ENCODE measurements at regions of chr11 and their contacts with region 1.

Region 1: DNA sequence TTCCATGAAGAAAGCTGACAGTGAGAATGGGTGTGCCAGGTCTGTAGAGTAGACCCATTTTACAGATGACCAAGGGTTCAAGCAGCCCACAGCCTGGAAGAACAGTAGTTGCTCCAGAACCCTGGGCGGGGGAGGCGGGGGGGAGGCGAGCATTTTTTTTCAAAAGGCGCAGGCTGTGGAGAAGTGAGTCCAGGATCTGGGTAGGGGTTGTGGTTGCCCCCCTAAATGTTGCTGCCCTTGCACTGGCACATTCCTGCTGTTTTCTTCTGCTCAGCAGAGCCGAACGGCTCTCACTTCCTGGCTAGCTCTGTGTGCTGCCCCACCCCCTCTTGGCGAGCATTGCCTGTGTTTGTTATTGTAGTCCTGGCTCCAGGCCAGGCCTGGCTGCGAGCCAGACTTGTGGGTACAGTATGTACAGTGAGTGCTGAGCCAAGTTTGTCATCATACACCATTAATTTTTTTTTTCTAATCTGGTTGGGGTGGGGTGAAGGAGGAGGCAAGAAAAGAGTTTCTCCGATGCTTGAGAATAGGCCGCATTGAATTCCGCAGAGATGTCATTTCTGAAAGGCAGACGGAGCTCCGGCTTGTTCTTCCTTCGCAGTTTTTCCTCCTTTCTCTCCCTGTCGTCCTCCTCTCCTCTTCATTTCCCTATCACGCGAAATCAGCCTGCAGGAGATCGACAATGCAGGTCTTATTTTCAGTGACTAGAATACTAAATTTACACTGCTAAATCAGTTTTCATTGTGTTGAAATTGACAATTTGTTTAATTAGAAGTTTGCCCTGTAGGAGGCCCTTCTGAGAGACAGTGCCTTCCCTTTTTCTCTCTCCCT is 100.5 kb downstream of the ZBTB16 start:
- DNase-seq: peak; percentile 100
- H3K4me3 Mint-ChIP-seq: peak overlapping the region; percentile 65
- H3K27ac Mint-ChIP-seq: peak overlapping the region; percentile 99
- H3K4me1 Mint-ChIP-seq: peaks cover 87% of the 10 kb centered on the region
- H3K27me3 Mint-ChIP-seq: no peaks in the 10 kb centered on the region
- CTCF ChIP-seq: peak; percentile 15

Region 2: DNA sequence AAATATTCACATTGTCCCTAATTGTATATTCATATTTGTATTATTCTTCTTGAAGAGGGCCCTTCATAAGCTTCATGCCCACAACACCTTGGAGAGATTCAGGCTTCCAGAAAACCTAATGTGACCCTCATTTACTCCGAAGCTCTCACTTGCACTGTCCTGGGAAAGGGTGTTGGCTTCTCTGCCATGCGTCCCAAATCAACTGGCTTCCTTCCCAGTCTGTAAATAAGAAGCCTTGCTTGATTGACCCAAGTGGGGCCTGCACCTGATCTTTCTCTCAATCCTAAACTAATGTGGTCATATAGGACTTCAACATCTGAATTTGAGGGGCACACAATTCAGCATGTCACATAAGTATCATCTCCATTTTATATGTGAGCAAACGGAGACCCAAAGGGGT is 141.0 kb before region 1 on chr11:
- CTCF ChIA-PET with region 1: no interaction called
- POLR2A ChIA-PET with region 1: no interaction called
- intact Hi-C with region 1: no loop called
- DNase-seq: no peak
- H3K4me3 Mint-ChIP-seq: no peak overlapping the region
- H3K27ac Mint-ChIP-seq: no peak overlapping the region
- H3K4me1 Mint-ChIP-seq: peaks cover 7% of the 10 kb centered on the region
- H3K27me3 Mint-ChIP-seq: no peaks in the 10 kb centered on the region
- CTCF ChIP-seq: no peak

Region 3: GRCh38 chr11:114080219-114080618 is 79.8 kb before region 1 on chr11:
- CTCF ChIA-PET with region 1: no interaction called
- POLR2A ChIA-PET with region 1: interaction called, 15 read pairs
- intact Hi-C with region 1: loop called (anchors 5 kb)
- DNase-seq: peak; percentile 75
- H3K4me3 Mint-ChIP-seq: peak overlapping the region; percentile 67
- H3K27ac Mint-ChIP-seq: peak overlapping the region; percentile 52
- H3K4me1 Mint-ChIP-seq: peaks cover 78% of the 10 kb centered on the region
- H3K27me3 Mint-ChIP-seq: no peaks in the 10 kb centered on the region
- CTCF ChIP-seq: no peak

Region 4: DNA sequence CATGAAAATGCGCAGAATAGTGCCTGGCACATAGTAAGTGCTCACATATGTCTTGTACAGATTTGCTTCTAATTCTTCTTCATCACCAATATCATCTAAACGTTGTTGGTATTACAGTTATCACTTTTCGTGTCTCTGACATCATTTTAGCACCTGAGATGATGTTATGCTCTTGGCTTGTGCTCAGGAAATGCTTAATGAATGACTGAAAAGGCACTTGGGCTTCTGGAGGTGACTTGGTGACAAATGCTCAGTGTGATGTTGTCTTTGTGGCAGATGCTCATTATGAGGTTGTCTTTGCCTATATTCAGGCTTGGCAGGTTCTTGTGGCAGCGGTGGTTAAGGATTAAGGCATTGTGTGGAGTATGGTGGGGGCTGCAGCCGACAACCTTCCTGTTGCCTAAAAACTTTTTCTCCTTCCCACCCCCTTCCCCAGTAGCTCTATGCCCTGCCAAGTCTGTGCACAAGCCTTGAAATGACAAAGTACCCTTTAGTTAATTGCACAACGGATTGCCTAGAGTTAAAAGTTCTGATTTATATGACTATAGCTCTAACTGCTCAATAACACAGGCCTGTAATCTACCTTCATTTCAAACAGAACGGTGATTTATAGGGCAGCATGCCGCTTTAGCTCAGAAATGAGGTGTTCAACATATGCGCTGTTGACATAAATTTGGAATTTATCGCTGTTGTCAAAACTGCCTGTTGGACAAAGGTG is 18.0 kb before region 1 on chr11:
- CTCF ChIA-PET with region 1: no interaction called
- POLR2A ChIA-PET with region 1: interaction called, 79 read pairs
- intact Hi-C with region 1: no loop called
- DNase-seq: no peak
- H3K4me3 Mint-ChIP-seq: no peak overlapping the region
- H3K27ac Mint-ChIP-seq: peak overlapping the region; percentile 21
- H3K4me1 Mint-ChIP-seq: peaks cover 55% of the 10 kb centered on the region
- H3K27me3 Mint-ChIP-seq: no peaks in the 10 kb centered on the region
- CTCF ChIP-seq: no peak

Region 5: DNA sequence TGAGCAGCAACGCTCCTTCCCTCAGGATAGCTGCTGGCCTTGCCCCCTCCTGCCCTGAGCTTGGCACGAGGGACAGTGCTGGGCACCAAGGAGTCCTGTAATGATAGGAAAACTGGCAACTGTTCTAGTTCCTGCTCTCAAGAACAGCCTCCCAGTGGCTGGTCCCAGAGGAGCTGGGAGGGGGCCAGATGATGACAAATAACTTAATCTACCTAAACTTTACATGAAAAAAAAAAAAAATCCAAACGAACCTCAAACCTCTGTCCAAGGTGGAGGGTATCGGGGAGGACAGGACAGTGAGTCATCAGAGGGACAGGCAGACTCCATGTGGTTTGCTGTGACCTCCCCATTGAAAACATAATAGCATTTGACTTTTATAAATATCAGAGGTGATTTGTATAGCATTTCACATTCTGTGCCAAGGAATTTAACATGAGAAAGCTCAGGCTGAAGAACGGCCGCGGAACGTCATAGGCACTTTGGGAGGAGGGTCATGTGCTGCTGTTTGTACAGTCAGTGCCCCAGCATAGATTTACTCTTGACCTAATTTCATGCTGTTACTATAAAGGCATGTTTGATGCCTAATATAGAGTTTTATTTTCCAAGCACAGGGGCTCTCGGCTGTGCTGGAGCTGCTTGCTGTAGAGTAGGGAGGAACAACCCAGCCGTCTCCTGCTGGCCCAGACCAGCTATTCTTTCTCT is 37.9 kb after region 1 on chr11:
- CTCF ChIA-PET with region 1: interaction called, 3 read pairs
- POLR2A ChIA-PET with region 1: interaction called, 1,399 read pairs
- intact Hi-C with region 1: loop called (anchors 1 kb)
- DNase-seq: peak; percentile 95
- H3K4me3 Mint-ChIP-seq: peak overlapping the region; percentile 1
- H3K27ac Mint-ChIP-seq: peak overlapping the region; percentile 97
- H3K4me1 Mint-ChIP-seq: peaks cover 66% of the 10 kb centered on the region
- H3K27me3 Mint-ChIP-seq: no peaks in the 10 kb centered on the region
- CTCF ChIP-seq: no peak

Measured in MCF 10A (cell line).